Vagina (tissue), 2 donors: ENCODE measurements at regions of chr17 and their contacts with region 1.

Region 1: DNA sequence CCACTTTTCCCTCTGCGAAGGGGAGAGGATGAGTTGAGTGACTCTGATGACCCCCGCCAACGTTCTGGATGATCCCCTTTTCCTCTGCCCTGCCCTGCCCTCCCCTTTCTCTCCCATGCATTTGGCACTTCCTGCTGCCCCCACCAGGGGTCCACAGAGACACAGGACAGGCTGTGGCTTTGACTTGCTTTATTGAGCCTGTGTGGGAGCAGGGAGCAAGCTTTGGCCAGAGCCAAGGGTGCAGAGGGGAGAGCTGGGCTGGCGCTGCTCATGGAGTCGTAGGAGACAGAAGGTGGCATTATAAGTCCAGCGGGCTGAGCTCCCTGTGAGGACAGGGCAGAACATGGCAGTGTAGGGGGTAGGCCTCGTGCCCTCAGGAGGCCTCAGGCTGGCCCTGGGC is 1.6 kb downstream of the PPY start:
- DNase-seq: no peak
- H3K4me3 ChIP-seq: no peak overlapping the region
- H3K27ac ChIP-seq: no peak overlapping the region
- H3K4me1 ChIP-seq: peaks cover 11% of the 10 kb centered on the region
- H3K27me3 ChIP-seq: no peaks in the 10 kb centered on the region
- CTCF ChIP-seq: no peak
- POLR2A ChIP-seq: no peak

Region 2: GRCh38 chr17:43994272-43995149 is 53.9 kb after region 1 on chr17:
- intact Hi-C with region 1: loop called (anchors 5 kb)
- DNase-seq: no peak
- H3K4me3 ChIP-seq: peak overlapping the region; percentile 25 to 47
- H3K27ac ChIP-seq: no peak overlapping the region
- H3K4me1 ChIP-seq: peaks cover 5% of the 10 kb centered on the region
- H3K27me3 ChIP-seq: no peaks in the 10 kb centered on the region
- CTCF ChIP-seq: peak; percentile 16 to 67 (median 45)
- POLR2A ChIP-seq: no peak

Region 3: DNA sequence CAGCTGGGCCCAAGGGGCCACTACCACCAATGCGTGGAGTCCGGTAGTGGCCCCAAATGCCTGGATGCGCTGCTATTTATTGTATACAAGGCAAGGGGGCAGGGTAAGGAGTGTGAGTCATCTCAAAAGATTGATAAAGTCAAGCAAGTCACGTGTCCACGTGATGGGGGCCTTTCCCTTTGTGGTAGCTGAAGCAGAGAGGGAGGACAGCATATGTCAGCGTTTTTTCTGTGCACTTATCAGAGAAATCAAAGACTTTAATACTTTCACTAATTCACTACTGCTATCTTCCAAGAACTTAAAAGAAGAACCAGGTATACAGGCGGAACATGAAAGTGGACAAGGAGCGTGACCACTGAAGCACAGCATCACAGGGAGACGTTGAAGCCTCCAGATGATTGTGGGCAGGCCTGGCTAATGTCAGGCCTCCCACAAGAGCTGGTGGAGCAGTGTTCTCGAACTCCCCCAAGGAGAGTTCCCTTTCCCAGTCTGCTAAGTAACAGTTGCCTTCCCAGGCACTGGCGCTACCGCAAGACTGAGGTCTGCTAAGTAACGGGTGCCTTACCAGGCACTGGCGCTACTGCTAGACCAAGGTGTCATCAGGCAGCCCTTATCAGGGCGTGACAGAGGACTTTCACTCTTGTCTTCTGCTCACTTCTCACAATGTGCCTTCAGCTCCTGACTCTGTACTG is 219.0 kb after region 1 on chr17:
- intact Hi-C with region 1: loop called (anchors 10 kb)
- DNase-seq: no peak
- H3K4me3 ChIP-seq: no peak overlapping the region
- H3K27ac ChIP-seq: no peak overlapping the region
- H3K4me1 ChIP-seq: no peaks in the 10 kb centered on the region
- H3K27me3 ChIP-seq: no peaks in the 10 kb centered on the region
- CTCF ChIP-seq: no peak
- POLR2A ChIP-seq: no peak

Region 4: GRCh38 chr17:44186307-44187130 is 245.9 kb after region 1 on chr17 and contains the start of gene TMUB2:
- intact Hi-C with region 1: no loop called
- DNase-seq: peak; percentile 99 to 100
- H3K4me3 ChIP-seq: peak within 1 kb of the TSS; percentile 75 to 98
- H3K27ac ChIP-seq: peak within 1 kb of the TSS; percentile 99
- H3K4me1 ChIP-seq: peaks cover 37% of the 10 kb centered on the region
- H3K27me3 ChIP-seq: no peaks in the 10 kb centered on the region
- CTCF ChIP-seq: no peak
- POLR2A ChIP-seq: peak in 1 of 2 donors; percentile 87
- total RNA-seq, gene TMUB2: 34.9 TPM